Uterus (tissue), 4 donors: ENCODE measurements at regions of chr13 and their contacts with region 1.

Region 1: DNA sequence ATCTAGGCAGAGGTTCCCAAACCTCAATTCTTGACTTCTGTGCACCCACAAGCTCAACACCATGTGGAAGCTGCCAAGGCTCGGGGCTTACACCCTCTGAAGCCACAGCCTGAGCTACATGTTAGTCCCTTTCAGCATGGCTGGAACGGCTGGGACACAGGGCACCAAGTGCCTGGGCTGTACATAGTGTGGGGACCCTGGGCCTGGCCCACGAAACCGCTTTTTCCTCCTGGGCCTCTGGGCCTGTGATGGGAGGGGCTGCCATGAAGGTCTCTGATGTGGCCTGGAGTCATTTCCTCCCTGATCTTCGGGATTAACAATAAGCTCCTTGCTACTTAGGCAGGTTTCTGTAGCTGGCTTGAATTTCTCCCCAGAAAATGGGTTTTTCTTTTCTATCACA is 108.1 kb downstream of the HS6ST3 start:
- DNase-seq: no peak
- H3K4me3 ChIP-seq: no peak overlapping the region
- H3K27ac ChIP-seq: no peak overlapping the region
- H3K4me1 ChIP-seq: no peaks in the 10 kb centered on the region
- H3K27me3 ChIP-seq: no peaks in the 10 kb centered on the region
- CTCF ChIP-seq: no peak
- POLR2A ChIP-seq: no peak

Region 2: DNA sequence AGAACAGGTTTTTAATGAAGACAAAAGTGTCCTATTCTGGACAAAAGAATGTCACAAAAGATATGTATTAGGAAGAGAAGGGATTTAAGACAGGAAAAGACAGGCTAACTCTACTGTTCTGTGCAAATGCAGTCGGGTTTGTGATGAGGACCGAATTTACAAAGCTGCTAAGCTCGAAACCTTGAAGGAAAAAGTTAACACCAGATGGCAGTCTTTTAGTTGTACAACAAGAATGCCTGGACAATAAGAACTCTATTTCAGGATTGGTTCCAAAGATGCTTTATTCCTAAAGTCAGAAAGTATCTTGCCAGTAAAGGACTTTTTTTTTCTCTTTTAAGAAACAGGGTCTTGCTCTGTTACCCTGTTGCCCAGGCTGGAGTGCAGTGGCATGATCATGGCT is 57.0 kb before region 1 on chr13:
- intact Hi-C with region 1: no loop called
- DNase-seq: no peak
- H3K4me3 ChIP-seq: no peak overlapping the region
- H3K27ac ChIP-seq: no peak overlapping the region
- H3K4me1 ChIP-seq: no peaks in the 10 kb centered on the region
- H3K27me3 ChIP-seq: no peaks in the 10 kb centered on the region
- CTCF ChIP-seq: peak in 1 of 4 experiments; percentile 15
- POLR2A ChIP-seq: no peak

Region 3: DNA sequence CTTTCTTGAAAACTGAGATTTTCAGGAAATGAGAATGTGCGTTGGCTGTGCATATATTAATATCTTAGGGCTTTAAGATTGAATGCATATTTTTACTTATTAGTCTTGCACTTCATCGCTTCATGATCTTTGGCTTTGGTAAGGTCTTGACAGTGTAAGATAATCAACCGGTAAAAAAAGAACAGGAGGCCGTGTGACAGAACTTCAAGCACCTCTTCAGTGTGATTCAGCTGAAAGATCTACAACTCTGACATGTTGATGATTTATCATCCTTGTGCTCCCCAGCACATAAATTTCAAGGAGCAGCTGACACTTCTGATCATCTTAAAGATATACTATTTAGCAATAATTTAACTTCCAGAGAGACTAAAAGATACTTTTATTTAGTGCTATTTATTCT is 86.9 kb after region 1 on chr13:
- intact Hi-C with region 1: loop called (anchors 5 kb)
- DNase-seq: no peak
- H3K4me3 ChIP-seq: no peak overlapping the region
- H3K27ac ChIP-seq: no peak overlapping the region
- H3K4me1 ChIP-seq: no peaks in the 10 kb centered on the region
- H3K27me3 ChIP-seq: no peaks in the 10 kb centered on the region
- CTCF ChIP-seq: no peak
- POLR2A ChIP-seq: no peak